Posterior vena cava (tissue), 2 donors: ENCODE measurements at regions of chr17 and their contacts with region 1.

Region 1: DNA sequence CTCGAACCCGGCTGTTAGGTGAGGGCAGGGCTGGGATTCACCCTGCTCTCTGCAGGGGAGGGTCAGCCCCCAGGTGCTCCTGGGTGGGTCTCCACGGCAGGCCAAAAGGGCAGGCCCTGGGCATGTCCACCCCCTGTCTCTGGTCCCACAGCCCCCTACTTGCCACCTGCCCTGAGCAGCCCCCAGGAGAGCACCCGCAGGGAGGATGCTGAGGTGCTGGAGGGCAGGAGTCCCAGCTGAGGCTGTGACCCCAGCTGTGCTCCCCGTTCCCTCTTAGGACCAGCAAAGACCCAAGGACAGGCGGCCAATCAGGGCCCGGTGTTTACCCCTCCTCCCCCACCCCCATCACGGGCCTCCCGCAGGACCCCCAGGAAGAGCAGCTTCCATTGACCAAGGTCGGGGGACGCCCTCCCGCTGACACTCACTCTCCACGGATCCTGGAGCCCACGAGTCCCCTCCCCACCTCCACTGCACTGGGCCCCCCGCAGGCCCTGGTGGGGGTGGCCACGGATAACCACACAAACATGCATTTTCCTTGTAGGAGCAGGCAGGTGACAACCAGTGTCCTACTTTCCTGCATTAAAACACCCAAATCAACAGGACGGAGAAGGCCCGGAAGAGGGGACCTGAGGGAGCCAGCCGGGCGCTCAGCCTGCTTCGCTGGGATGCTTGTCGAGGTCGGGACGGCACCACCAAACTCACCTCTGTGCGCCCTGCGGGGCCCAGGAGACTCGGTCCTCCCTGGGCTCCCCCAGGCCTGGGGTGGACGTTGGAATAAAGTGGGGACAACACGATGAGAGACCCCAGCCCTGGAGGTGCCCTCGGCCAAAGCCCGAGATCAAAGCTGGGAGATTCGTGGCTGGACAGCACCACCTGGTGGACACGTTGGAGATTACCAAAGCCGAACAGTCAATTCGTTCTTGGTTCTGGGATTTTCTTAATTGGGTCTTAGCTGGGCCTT is 22.5 kb upstream of the ENPP7 start:
- DNase-seq: no peak

Region 2: DNA sequence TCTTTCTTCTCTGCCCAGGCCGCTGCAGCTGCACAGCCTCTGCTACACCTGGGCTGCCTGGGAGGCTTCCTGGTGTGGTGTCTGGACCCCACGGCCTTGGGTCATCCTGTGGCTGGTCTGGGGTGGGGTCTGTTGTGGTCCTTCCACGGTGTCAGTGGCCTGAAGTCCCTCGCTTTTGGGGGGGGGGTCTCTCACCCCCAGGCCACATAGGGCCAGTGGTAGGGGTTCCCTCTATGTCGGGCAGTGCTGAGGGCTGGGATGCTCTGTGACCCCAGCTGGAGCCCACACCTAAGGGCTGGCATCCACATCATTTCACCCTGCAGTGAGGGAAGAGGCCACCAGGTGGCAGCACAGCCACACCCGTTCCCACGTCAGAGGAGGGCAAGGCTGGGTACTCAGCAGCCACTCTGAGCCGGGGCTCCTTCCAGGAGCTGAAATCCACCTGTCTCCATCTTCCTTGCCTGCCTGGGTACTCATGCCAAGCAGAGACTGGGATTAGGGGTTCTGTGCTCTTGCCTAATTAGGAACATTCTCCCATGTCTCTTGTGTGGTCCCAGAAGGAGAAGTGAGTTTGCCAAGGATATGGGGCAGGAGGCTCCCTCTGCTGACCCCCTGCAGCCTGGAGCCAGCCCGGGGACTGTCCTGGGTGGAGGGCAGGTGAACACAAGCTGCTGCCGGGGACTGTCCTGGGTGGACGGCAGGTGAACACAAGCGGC is 620.6 kb before region 1 on chr17:
- intact Hi-C with region 1: loop called in 1 of 2 experiments (anchors 10 kb)
- DNase-seq: peak; percentile 91

Region 3: GRCh38 chr17:79095345-79096055 is 612.7 kb before region 1 on chr17:
- intact Hi-C with region 1: loop called in 1 of 2 experiments (anchors 5 kb)
- DNase-seq: no peak

Region 4: DNA sequence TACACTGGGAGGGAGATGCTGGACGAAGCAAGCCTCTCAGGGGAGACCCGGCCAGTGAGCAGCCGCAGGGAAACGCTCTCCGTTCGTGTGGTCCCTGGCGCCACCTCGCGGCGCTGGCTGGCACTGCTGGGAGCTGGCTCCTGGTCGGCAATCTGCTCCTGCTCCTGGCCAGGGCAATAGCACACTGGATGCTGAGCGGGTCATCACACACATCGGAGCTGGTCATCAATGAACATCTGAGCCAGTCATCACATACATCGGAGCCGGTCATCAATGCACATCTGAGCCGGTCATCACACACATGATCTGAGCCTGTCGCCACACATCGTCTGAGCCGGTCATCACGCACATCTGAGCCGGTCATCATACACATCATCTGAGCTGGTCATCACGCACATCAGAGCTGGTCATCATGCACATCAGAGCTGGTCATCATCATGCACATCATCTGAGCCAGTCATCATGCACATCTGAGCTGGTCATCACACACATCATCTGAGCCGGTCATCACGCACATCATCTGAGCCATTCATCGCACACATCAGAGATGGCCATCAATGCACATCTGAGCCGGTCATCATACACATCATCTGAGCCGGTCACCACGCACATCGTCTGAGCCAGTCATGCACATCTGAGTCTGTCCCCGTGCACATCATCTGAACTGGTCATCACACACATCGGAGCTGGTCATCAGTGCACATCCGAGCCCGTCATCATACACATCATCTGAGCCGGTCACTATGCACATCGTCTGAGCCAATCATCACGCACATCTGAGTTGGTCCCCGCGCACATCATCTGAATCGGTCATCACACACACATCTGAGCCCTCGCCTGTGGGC is 314.6 kb before region 1 on chr17:
- intact Hi-C with region 1: loop called (anchors 10 kb)
- DNase-seq: peak; percentile 94

Region 5: GRCh38 chr17:79658811-79659207 is 49.4 kb before region 1 on chr17:
- intact Hi-C with region 1: loop called in 1 of 2 experiments (anchors 2 kb)
- DNase-seq: no peak

Region 6: GRCh38 chr17:79777894-79778503 is 69.8 kb after region 1 on chr17 and contains the start of gene CBX2:
- intact Hi-C with region 1: no loop called
- DNase-seq: peak; percentile 91
- total RNA-seq, gene CBX2: 1.6 to 1.8 TPM